K562 (cell line): ENCODE measurements at regions of chr1 and their contacts with region 1.

Region 1: DNA sequence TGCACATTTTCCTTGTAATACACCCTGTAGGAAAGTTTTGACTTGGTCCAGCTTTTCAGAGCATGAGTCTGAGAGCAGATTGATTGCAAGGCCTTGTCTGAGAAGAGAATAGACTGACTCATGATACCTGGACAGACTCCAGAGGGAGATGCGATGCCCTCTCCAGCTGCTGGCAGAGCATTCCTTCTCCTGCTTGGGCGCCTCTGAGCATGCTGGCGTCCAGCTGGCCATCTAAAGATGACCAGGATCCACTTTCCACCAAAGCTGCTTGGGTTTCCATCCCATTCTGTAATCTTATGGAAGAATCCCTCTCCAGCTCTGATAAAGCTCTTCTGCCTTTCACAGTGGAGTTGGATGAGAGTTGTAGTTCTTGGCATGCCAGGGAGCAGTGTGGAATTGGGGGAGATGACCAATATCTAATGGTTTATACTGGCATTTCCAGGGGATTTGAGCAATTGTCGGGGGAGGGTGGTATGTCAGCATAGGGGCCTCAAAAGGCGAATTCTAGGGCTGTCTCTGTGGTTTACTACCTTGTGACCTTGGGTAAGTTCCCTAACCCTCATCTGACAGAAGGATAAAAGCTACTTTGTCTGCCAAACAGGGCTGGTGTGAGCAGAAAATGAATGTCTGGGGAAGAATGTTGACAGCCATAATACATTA is 19.5 kb downstream of the SZRD1 start:
- DNase-seq: no peak
- ATAC-seq: 0 out of 3 replicates have a peak, but pooled peaks have one; percentile 8
- H3K4me3 ChIP-seq: no peak overlapping the region
- H3K27ac ChIP-seq: no peak overlapping the region
- H3K4me1 ChIP-seq: peaks cover 3 to 28% of the 10 kb centered on the region in 2 experiments; a peak in 3 of 5 replicates
- H3K27me3 ChIP-seq: no peaks in the 10 kb centered on the region
- CTCF ChIP-seq: no peak
- EP300 ChIP-seq: no peak
- POLR2A ChIP-seq: no peak
- RAD21 ChIP-seq: no peak

Region 2: GRCh38 chr1:16375521-16376359 is 10.8 kb before region 1 on chr1:
- CTCF ChIA-PET with region 1: no interaction called
- POLR2A ChIA-PET with region 1: interaction called, 16 read pairs
- in situ Hi-C with region 1: no loop called
- intact Hi-C with region 1: no loop called
- DNase-seq: peak in 1 of 4 experiments; percentile 8
- ATAC-seq: peak; percentile 14; the same call in 1 of the 3 replicates
- H3K4me3 ChIP-seq: no peak overlapping the region
- H3K27ac ChIP-seq: peak overlapping the region; percentile 18; the same call in 1 of the 3 replicates
- H3K4me1 ChIP-seq: peaks cover 22 to 24% of the 10 kb centered on the region in 2 experiments
- H3K27me3 ChIP-seq: no peaks in the 10 kb centered on the region
- CTCF ChIP-seq: no peak
- EP300 ChIP-seq: no peak
- POLR2A ChIP-seq: no peak
- RAD21 ChIP-seq: no peak